A549 (cell line): ENCODE measurements at regions of chr17 and their contacts with region 1.

Region 1: GRCh38 chr17:35063514-35064223 is at the start of gene RFFL:
- DNase-seq: peak; percentile 99
- ATAC-seq: peak; percentile 97 to 100
- H3K4me3 ChIP-seq: peak within 1 kb of the TSS; percentile 38
- H3K27ac ChIP-seq: peak within 1 kb of the TSS; percentile 92 to 93
- H3K4me1 ChIP-seq: peaks cover 59% of the 10 kb centered on the region
- CTCF ChIP-seq: no peak
- EP300 ChIP-seq: peak; percentile 61 to 86; a peak in 3 of 5 replicates
- POLR2A ChIP-seq: peak; percentile 31
- RAD21 ChIP-seq: peak; percentile 56 to 67
- polyA plus RNA-seq, gene RFFL: 35.5 and 49.4 TPM in 2 replicates

Region 2: GRCh38 chr17:34974179-34974578 is 89.5 kb before region 1 on chr17:
- CTCF ChIA-PET with region 1: no interaction called
- POLR2A ChIA-PET with region 1: no interaction called
- DNase-seq: no peak
- ATAC-seq: no peak
- H3K4me3 ChIP-seq: no peak overlapping the region
- H3K27ac ChIP-seq: no peak overlapping the region
- H3K4me1 ChIP-seq: peaks cover under 1% of the 10 kb centered on the region; the same call in 1 of the 3 replicates
- CTCF ChIP-seq: no peak
- EP300 ChIP-seq: no peak
- POLR2A ChIP-seq: no peak
- RAD21 ChIP-seq: no peak

Region 3: GRCh38 chr17:35082073-35082657 is 18.5 kb after region 1 on chr17:
- CTCF ChIA-PET with region 1: interaction called, 20 read pairs
- POLR2A ChIA-PET with region 1: interaction called, 21 read pairs
- DNase-seq: no peak
- ATAC-seq: no peak
- H3K4me3 ChIP-seq: no peak overlapping the region; the same call in 2 of the 3 replicates
- H3K27ac ChIP-seq: peak overlapping the region; percentile 88 to 96
- H3K4me1 ChIP-seq: peaks cover 100% of the 10 kb centered on the region
- CTCF ChIP-seq: no peak
- EP300 ChIP-seq: no peak
- POLR2A ChIP-seq: no peak
- RAD21 ChIP-seq: no peak